ENCODE measurements at regions of chr3 and their contacts with region 1.

Region 1: DNA sequence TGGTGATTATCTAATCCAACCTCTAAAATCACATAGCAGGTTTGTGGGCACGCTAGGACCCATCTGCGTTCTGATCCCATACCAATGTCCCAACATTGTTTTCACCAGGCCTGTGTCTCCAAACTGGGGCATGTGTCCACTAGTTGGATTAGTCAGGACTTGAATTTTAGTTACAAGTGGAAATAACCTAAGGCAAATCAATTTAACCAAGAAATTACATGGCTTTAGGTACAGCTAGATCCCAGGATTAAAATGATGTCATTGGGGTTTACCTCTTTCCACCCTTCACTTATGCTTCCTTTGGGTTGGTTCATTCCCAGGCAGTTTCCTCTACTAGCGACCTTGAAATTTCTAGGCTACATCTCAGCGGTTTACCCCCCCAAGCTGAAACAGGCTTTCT is 47.2 kb upstream of the PXYLP1 start:
- DNase-seq: no peak
- ATAC-seq: no peak

Region 2: DNA sequence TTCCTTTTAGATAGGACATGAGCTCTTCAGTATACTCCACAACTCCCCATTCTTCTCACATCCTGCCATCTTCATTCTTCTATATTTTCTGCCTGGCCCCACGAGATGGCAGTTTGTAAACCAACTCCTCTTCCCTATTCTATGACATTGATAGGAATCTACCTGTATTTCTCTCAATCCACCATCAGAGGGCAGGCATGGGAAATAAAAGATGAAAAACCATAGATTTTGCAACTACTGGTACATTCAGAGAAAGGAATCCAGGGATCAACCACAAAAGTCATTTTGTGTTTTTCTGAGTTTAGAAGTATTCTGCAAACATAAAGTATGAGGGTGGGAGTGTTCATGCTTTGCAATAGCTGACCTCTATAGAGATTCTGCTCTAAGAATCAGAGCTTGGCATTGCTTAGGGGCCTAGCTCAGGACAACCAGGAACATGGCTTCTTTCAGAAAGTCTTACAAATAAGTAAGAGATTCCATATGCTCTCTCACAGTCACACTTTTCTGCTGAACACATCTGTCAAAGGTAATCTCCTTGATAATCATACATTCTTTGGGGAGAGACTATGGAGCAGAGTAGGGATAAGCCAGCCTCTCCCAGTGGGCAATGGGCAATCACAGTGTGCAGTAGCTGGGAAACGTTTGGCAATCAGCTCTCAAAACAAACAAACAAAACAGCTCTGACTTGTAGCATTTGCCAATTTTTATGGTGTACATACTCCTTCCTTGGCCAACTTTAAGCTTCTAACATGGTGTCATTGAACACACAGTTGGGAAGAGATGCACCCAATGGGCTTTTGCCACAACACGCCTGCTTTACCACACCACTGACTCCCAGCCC is 285.9 kb before region 1 on chr3:
- intact Hi-C with region 1: loop called (anchors 10 kb)
- DNase-seq: no peak
- ATAC-seq: peak; percentile 70

Region 3: DNA sequence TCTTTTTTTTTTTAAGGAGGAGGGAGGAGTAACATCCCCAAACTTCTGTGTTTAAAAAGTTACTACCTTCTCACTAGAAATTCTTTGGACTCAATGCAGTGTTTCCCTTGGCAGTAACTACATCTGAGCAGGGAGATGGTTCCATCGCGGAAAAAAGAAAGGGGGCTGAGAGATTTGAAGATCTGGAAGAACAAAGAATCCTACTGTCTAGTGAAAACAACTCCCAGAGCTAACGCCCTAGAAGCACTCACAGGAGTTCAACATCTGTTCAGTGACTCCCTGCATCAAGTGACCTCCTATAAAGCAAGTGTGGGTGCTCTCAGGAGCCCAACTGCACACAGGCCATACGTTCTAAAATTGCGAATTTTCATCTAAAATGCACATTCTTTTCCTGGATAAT is 19.6 kb before region 1 on chr3:
- intact Hi-C with region 1: no loop called
- DNase-seq: no peak
- ATAC-seq: peak; percentile 31

Region 4: GRCh38 chr3:141412087-141412935 is 227.9 kb after region 1 on chr3:
- intact Hi-C with region 1: no loop called
- DNase-seq: peak; percentile 62
- ATAC-seq: peak; percentile 72

Measured in Right ventricle myocardium superior (tissue), 1 donor.